Naive thymus-derived CD4-positive, alpha-beta T cell (primary cell): ENCODE measurements at regions of chr1 and their contacts with region 1.

Region 1: DNA sequence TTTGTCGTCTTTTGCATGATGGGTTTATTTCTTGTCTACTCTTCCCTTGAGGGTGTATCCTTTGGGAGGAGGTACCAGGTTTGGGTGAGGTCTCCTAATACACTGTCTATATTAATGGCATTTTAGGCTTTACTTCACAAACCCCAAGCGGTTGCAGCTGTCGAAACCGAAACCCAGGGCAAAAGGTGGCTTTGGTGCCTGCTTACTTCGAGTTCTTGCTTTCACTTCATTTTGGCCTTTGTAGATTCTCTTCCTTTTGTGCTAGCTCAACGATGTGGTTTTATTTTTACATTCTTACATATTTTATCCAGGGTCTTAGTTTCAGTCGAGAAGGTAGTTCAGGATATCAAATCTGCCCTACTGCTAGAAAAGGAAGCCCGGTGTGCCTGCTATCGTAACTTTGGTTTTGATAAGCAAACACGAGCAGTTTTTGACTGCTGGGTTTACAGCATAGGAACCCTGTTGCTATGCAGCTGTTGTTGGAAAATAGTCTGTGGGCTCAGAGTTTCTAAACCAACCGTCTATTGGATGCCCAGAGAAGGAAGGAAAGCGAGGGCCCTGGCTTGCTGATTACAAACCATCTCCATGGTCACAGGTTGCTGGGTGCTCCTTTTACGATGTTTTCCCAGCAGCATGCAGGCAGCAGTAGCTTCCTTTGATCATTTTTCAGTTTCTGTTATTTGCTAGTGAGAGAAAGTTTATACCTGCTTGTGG is 9.8 kb upstream of the TSPAN2 start:
- DNase-seq: peak; percentile 31 to 95 (median 94)
- ATAC-seq: peak; percentile 95
- H3K4me3 ChIP-seq: peak overlapping the region; percentile 58
- H3K4me3 Mint-ChIP-seq: peak overlapping the region; percentile 76 to 99 (median 90)
- H3K27ac ChIP-seq: peak overlapping the region; percentile 89
- H3K27ac Mint-ChIP-seq: peak overlapping the region; percentile 98 to 100 (median 99)
- H3K4me1 ChIP-seq: peaks cover 20 to 29% of the 10 kb centered on the region in 2 donors
- H3K4me1 Mint-ChIP-seq: peaks cover 24 to 59% (median 51%) of the 10 kb centered on the region in 7 donors
- H3K27me3 ChIP-seq: no peaks in the 10 kb centered on the region
- H3K27me3 Mint-ChIP-seq: peaks cover 0 to 27% (median 0%) of the 10 kb centered on the region in 5 donors

Region 2: GRCh38 chr1:114511032-114511785 is 587.9 kb before region 1 on chr1 and contains the start of gene TRIM33:
- CTCF ChIA-PET with region 1: no interaction called
- POLR2A ChIA-PET with region 1: no interaction called
- intact Hi-C with region 1: loop called (anchors 2 kb)
- DNase-seq: peak; percentile 91 to 95 (median 93)
- ATAC-seq: peak; percentile 89
- H3K4me3 ChIP-seq: peak within 1 kb of the TSS; percentile 71
- H3K4me3 Mint-ChIP-seq: peak within 1 kb of the TSS; percentile 86 to 99 (median 97)
- H3K27ac ChIP-seq: peak within 1 kb of the TSS; percentile 100
- H3K27ac Mint-ChIP-seq: peak within 1 kb of the TSS; percentile 98 to 100 (median 99)
- H3K4me1 ChIP-seq: peaks cover 22 to 29% of the 10 kb centered on the region in 2 donors
- H3K4me1 Mint-ChIP-seq: peaks cover 41 to 63% (median 52%) of the 10 kb centered on the region in 7 donors
- H3K27me3 ChIP-seq: no peaks in the 10 kb centered on the region
- H3K27me3 Mint-ChIP-seq: peaks cover 0 to 7% (median 0%) of the 10 kb centered on the region in 5 donors
- total RNA-seq, gene TRIM33: 43.8 to 57.6 (median 51.1) TPM

Region 3: DNA sequence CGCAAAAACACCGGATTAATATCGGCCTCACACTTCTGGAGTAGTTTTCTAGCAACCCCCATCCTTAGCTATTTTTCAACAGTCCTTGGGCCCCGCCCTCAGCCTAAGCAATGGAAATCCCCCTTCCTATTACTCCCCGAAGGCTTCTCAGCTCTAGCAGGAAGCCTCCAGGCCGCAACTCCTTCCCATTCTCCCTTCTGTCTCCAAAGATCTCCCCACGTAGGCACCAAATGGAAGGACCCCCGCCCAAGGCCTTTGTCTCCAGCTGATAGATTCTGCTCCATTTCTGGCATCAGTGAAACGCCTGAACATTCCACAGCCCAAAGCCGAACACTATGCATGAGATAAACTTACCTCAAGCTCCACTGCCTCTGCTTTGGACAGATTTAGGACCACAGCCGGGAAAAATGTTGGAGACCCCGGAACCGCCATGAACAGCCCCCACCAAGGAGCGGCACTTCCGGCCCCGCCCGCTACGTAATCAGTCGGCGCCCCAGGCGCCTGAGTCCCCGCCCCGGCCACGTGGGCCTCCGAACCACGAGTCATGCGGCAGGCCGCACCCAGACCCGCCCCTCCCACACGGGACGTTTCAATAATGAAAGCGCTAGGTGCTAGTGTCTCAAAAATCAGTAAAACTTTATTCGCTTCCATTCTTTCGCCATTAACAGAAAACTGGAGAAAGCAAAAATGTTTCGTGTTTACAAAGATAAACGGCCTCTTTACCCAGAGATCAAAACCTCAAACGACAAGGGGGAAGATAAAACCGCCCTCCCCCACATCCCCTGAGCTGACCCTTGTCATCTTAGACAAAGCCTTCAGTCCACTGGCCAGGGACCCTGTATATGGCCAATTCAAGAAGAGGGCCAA is 382.6 kb before region 1 on chr1 and contains the start of gene NRAS:
- CTCF ChIA-PET with region 1: no interaction called
- POLR2A ChIA-PET with region 1: no interaction called
- intact Hi-C with region 1: loop called in 1 of 2 experiments (anchors 2 kb)
- DNase-seq: peak; percentile 90 to 96 (median 94)
- ATAC-seq: peak; percentile 98
- H3K4me3 ChIP-seq: peak within 1 kb of the TSS; percentile 98
- H3K4me3 Mint-ChIP-seq: peak within 1 kb of the TSS; percentile 91 to 100 (median 96)
- H3K27ac ChIP-seq: peak within 1 kb of the TSS; percentile 98
- H3K27ac Mint-ChIP-seq: peak within 1 kb of the TSS; percentile 93 to 99 (median 97)
- H3K4me1 ChIP-seq: peaks cover 17 to 20% of the 10 kb centered on the region in 2 donors
- H3K4me1 Mint-ChIP-seq: peaks cover 10 to 34% (median 25%) of the 10 kb centered on the region in 7 donors
- H3K27me3 ChIP-seq: no peaks in the 10 kb centered on the region
- H3K27me3 Mint-ChIP-seq: no peaks in the 10 kb centered on the region
- total RNA-seq, gene NRAS: 22.3 to 56.0 (median 25.0) TPM

Region 4: DNA sequence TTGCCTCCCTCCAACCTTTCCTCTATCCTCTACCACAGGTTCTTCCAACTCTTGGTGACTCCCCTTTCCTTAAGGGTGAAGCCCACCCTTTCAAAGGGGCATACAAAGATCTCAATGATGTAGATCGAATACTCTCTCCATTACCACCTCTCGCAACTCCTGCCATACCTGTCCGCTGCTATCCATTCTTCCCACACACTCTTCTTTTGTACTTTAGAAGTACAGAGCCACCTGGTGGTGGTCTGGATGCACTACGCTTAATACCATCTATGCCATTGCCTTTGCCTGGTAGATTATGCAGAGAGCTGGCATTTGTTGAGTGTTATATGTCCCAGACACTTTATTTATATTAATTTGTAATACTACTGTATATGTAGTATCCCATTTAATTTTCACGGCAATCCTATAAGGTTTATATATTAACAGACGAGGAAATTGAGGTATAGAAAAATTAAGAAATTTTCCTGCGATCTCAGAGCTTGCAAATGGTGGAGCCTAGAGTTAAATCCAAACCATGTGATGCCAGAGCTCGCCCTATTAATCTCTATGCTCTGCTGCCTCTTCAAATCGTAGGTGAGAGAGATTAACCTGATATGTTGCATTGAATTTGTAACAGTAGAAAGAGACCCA is 46.6 kb before region 1 on chr1:
- CTCF ChIA-PET with region 1: interaction called, 11 read pairs
- POLR2A ChIA-PET with region 1: interaction called, 6 read pairs
- intact Hi-C with region 1: no loop called
- DNase-seq: peak in 8 of 9 donors; percentile 18 to 58 (median 47)
- ATAC-seq: peak; percentile 94
- H3K4me3 ChIP-seq: no peak overlapping the region
- H3K4me3 Mint-ChIP-seq: no peak overlapping the region
- H3K27ac ChIP-seq: no peak overlapping the region
- H3K27ac Mint-ChIP-seq: no peak overlapping the region
- H3K4me1 ChIP-seq: no peaks in the 10 kb centered on the region
- H3K4me1 Mint-ChIP-seq: peaks cover 0 to 5% (median 4%) of the 10 kb centered on the region in 7 donors
- H3K27me3 ChIP-seq: no peaks in the 10 kb centered on the region
- H3K27me3 Mint-ChIP-seq: peaks cover 0 to 12% (median 0%) of the 10 kb centered on the region in 5 donors

Region 5: GRCh38 chr1:115112496-115113375 is 13.6 kb after region 1 on chr1:
- CTCF ChIA-PET with region 1: interaction called, 7 read pairs
- POLR2A ChIA-PET with region 1: interaction called, 3 read pairs
- intact Hi-C with region 1: loop called in 1 of 2 experiments (anchors 1 kb)
- DNase-seq: peak; percentile 18 to 62 (median 40)
- ATAC-seq: peak; percentile 61
- H3K4me3 ChIP-seq: no peak overlapping the region
- H3K4me3 Mint-ChIP-seq: no peak overlapping the region
- H3K27ac ChIP-seq: no peak overlapping the region
- H3K27ac Mint-ChIP-seq: peak overlapping the region in 5 of 9 donors; percentile 23 to 63 (median 39)
- H3K4me1 ChIP-seq: no peaks in the 10 kb centered on the region
- H3K4me1 Mint-ChIP-seq: peaks cover 0 to 18% (median 8%) of the 10 kb centered on the region in 7 donors
- H3K27me3 ChIP-seq: no peaks in the 10 kb centered on the region
- H3K27me3 Mint-ChIP-seq: peaks cover 0 to 3% (median 0%) of the 10 kb centered on the region in 5 donors